ENCODE measurements at regions of chr17 and their contacts with region 1.

Region 1: DNA sequence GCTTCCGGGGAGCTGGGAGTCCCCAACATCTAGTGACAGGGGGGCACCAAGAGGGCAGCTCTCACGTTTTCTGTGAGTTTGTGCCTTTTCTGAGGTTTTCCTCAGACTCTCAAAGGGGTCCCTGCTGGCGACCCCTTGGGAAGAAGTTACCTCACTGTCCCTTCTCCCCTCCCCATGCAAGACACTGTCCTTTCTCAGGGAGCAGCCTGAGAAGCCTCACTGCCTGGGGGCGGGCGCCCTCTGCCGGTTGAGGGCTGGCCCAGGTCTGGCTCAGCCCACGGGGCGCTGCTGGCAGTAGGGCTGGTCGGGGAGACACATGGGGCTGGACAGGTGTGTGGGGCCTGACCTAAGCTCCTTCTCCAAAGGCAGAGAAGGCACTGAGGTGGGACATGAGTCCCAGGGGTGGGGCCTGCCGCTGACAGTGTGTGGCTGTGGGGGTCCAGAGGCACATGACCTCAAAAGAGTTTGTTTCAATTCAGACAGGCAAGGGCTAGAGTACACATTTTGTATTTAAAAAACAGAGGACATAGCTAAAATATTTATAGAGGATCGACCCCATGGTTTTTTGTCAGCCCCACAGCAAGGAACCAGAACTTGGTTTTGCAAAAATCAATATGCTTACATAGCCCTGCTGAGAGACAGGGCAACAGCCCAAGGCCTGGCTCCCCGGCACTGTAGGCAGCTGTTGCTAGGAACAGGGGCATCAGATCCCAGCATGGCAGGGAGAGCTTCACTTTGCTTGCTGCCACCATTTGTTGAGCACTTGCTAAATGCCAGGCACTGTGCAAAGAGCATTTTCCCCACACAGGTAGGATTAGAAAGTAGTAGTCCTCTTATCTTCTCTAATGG is 18.5 kb upstream of the ALDH3A1 start:
- DNase-seq: peak; percentile 77 to 86
- ATAC-seq: peak; percentile 83 to 93
- H3K4me3 ChIP-seq: no peak overlapping the region
- H3K27ac ChIP-seq: peak overlapping the region; percentile 9 to 51; a peak in 3 of 6 replicates
- H3K4me1 ChIP-seq: peaks cover 10% of the 10 kb centered on the region
- CTCF ChIP-seq: peak; percentile 99
- EP300 ChIP-seq: no peak
- POLR2A ChIP-seq: no peak
- RAD21 ChIP-seq: peak; percentile 100

Region 2: DNA sequence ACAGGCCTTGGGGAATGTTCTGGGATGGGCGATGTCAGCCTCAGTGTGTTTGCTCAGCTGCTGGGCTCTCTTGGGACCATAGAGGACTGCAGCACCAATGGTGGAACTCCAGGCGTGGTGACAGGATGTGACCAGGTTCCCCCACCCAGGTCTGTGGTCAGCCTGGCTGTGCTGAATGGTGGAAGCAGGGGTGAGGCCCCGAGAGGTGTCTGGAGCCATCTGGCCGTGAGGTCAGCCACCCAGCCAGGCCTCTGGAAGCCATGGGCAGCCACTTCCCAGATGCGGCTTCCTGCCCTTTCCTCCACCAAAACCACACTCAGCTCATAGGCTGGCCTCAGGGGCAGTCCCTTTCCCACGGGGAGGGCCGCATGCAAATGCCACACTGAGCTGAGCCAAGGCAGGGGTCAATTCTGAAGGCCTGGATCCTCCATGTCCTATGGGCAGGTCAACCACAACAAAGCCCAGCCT is 396.1 kb before region 1 on chr17:
- CTCF ChIA-PET with region 1: interaction called, 152 read pairs
- POLR2A ChIA-PET with region 1: interaction called, 10 read pairs
- DNase-seq: no peak
- ATAC-seq: no peak
- H3K4me3 ChIP-seq: no peak overlapping the region
- H3K27ac ChIP-seq: no peak overlapping the region
- H3K4me1 ChIP-seq: peaks cover 14% of the 10 kb centered on the region
- CTCF ChIP-seq: no peak
- EP300 ChIP-seq: no peak
- POLR2A ChIP-seq: no peak
- RAD21 ChIP-seq: no peak

Region 3: GRCh38 chr17:19470532-19471261 is 295.9 kb before region 1 on chr17:
- CTCF ChIA-PET with region 1: interaction called, 10 read pairs
- POLR2A ChIA-PET with region 1: no interaction called
- DNase-seq: no peak
- ATAC-seq: 0 out of 6 replicates have a peak, but pooled peaks of 1 of the 2 experiments have one; percentile 31
- H3K4me3 ChIP-seq: no peak overlapping the region
- H3K27ac ChIP-seq: no peak overlapping the region
- H3K4me1 ChIP-seq: no peaks in the 10 kb centered on the region
- CTCF ChIP-seq: no peak
- EP300 ChIP-seq: no peak
- POLR2A ChIP-seq: no peak
- RAD21 ChIP-seq: no peak

Region 4: GRCh38 chr17:19520641-19521040 is 246.0 kb before region 1 on chr17:
- CTCF ChIA-PET with region 1: interaction called, 207 read pairs
- POLR2A ChIA-PET with region 1: interaction called, 5 read pairs
- DNase-seq: no peak
- ATAC-seq: no peak; a peak in 1 of 6 replicates
- H3K4me3 ChIP-seq: no peak overlapping the region
- H3K27ac ChIP-seq: no peak overlapping the region
- H3K4me1 ChIP-seq: no peaks in the 10 kb centered on the region
- CTCF ChIP-seq: no peak
- EP300 ChIP-seq: no peak
- POLR2A ChIP-seq: no peak
- RAD21 ChIP-seq: no peak

Region 5: GRCh38 chr17:19648475-19649406 is 117.9 kb before region 1 on chr17 and contains the start of gene ALDH3A2:
- CTCF ChIA-PET with region 1: interaction called, 62 read pairs
- POLR2A ChIA-PET with region 1: interaction called, 29 read pairs
- DNase-seq: peak; percentile 99
- ATAC-seq: peak; percentile 89 to 94
- H3K4me3 ChIP-seq: peak within 1 kb of the TSS; percentile 82
- H3K27ac ChIP-seq: peak within 1 kb of the TSS; percentile 95 to 96
- H3K4me1 ChIP-seq: peaks cover 67% of the 10 kb centered on the region
- CTCF ChIP-seq: peak; percentile 26; the same call in 1 of the 3 replicates
- EP300 ChIP-seq: no peak; a peak in 1 of 5 replicates
- POLR2A ChIP-seq: peak; percentile 77
- RAD21 ChIP-seq: peak; percentile 35 to 54; a peak in 4 of 5 replicates
- polyA plus RNA-seq, gene ALDH3A2: 195 and 225 TPM in 2 replicates

Region 6: GRCh38 chr17:19728079-19728495 is 38.6 kb before region 1 on chr17:
- CTCF ChIA-PET with region 1: interaction called, 145 read pairs
- POLR2A ChIA-PET with region 1: interaction called, 4 read pairs
- DNase-seq: peak in 1 of 2 experiments; percentile 69
- ATAC-seq: peak; percentile 52 to 54; a peak in 5 of 6 replicates
- H3K4me3 ChIP-seq: no peak overlapping the region
- H3K27ac ChIP-seq: peak overlapping the region; percentile 67 to 82
- H3K4me1 ChIP-seq: peaks cover 35% of the 10 kb centered on the region
- CTCF ChIP-seq: no peak
- EP300 ChIP-seq: no peak
- POLR2A ChIP-seq: no peak
- RAD21 ChIP-seq: no peak

Region 7: GRCh38 chr17:19781488-19782458 is 15.1 kb after region 1 on chr17:
- CTCF ChIA-PET with region 1: interaction called, 60 read pairs
- POLR2A ChIA-PET with region 1: no interaction called
- DNase-seq: no peak
- ATAC-seq: no peak
- H3K4me3 ChIP-seq: no peak overlapping the region
- H3K27ac ChIP-seq: no peak overlapping the region
- H3K4me1 ChIP-seq: no peaks in the 10 kb centered on the region
- CTCF ChIP-seq: no peak
- EP300 ChIP-seq: no peak
- POLR2A ChIP-seq: no peak
- RAD21 ChIP-seq: no peak

Region 8: DNA sequence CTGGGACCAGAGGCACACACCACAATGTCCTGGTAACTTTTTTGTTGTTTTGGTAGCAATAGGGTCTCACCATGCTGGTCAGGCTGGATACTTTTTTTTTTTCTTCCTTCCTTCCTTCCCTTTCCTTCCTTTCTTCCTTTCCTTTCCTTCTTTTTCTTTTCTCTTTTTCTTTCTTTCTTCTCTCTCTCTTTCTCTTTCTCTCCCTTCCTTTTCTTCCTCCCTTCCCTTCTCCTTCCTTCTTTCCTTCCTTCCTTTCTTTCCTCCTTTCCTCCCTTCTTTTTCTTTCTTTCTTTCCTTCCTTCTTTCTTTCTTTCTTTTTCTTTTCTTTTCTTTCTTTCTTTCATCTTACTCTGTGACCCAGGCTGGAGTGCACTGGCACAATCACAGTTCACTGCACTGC is 119.5 kb after region 1 on chr17:
- CTCF ChIA-PET with region 1: no interaction called
- POLR2A ChIA-PET with region 1: no interaction called
- DNase-seq: no peak
- ATAC-seq: no peak
- H3K4me3 ChIP-seq: no peak overlapping the region
- H3K27ac ChIP-seq: no peak overlapping the region
- H3K4me1 ChIP-seq: no peaks in the 10 kb centered on the region
- CTCF ChIP-seq: no peak
- EP300 ChIP-seq: no peak
- POLR2A ChIP-seq: no peak
- RAD21 ChIP-seq: no peak

Measured in A549 (cell line).